A673 (cell line): ENCODE measurements at regions of chr1 and their contacts with region 1.

Region 1: GRCh38 chr1:227318003-227318852 is at the start of gene CDC42BPA:
- DNase-seq: peak; percentile 96
- H3K4me3 ChIP-seq: peak within 1 kb of the TSS; percentile 90
- H3K27ac ChIP-seq: peak within 1 kb of the TSS; percentile 92
- H3K4me1 ChIP-seq: peaks cover 11% of the 10 kb centered on the region
- H3K27me3 ChIP-seq: peaks cover 21% of the 10 kb centered on the region
- CTCF ChIP-seq: no peak
- total RNA-seq, gene CDC42BPA: 21.0 and 21.7 TPM in 2 replicates

Region 2: DNA sequence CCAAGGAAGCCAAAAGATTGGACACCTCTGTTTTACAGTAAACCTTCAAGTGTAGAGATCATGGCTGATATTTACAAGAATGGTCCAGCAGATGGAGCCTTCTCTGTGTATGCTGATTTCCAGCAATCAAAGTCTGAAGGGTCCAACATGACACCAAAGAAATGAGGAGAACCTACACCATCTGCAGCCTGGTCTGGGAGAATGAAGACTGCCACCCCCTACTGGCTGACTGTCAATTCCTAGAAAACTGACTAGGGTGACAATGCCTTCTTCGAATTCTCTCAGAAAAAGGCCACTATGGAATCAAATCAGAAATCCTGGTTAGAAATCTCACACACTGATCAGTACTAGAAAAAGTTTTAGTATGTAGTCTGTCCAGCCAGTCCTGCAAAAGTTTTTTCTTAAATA is 83.2 kb before region 1 on chr1:
- CTCF ChIA-PET with region 1: no interaction called
- POLR2A ChIA-PET with region 1: no interaction called
- intact Hi-C with region 1: loop called (anchors 5 kb)
- DNase-seq: peak; percentile 90
- H3K4me3 ChIP-seq: no peak overlapping the region
- H3K27ac ChIP-seq: no peak overlapping the region
- H3K4me1 ChIP-seq: no peaks in the 10 kb centered on the region
- H3K27me3 ChIP-seq: no peaks in the 10 kb centered on the region
- CTCF ChIP-seq: peak; percentile 84